ENCODE measurements at regions of chr19 and their contacts with region 1.

Region 1: GRCh38 chr19:38711726-38712153 is 32.5 kb downstream of the CAPN12 start:
- DNase-seq: peak; percentile 55 to 83 (median 72)
- H3K4me3 ChIP-seq: no peak overlapping the region
- H3K27ac ChIP-seq: peak overlapping the region in 1 of 2 donors; percentile 35
- H3K4me1 ChIP-seq: peaks cover 22% of the 10 kb centered on the region
- H3K27me3 ChIP-seq: no peaks in the 10 kb centered on the region
- CTCF ChIP-seq: no peak
- EP300 ChIP-seq: no peak
- POLR2A ChIP-seq: no peak

Region 2: DNA sequence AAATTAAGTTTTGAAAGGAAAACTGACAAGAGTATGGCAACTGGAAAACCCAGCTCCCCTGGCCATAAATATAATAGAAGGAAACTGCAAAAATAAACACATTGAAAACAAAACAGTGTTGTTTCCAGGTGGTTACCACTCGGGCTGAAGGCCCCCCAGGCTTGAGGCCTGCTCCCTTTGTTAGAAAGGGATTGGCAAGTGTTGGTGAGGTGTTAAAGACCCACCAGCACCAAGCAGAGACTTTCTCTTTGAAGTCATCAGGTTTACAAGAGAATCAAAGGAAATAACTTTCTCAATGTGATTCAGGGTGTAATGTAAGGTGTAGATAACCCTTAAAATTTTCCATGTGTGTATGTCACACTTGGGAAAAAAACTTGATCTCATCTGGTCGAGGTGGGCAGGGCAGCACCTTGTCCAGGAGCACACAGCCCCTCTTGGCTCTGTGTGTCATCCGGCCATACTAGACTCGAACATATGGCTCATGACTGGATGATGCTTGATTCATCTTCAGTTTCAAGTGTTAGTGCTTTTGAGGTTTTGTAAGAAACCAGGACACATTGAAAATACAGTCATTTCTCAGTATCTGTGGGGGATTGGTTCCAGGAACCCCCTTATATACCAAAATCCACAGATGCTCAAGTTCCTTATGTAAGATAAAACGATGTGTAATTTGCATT is 56.5 kb before region 1 on chr19:
- intact Hi-C with region 1: loop called in 2 of 4 experiments (anchors 2 to 5 kb)
- DNase-seq: no peak
- H3K4me3 ChIP-seq: no peak overlapping the region
- H3K27ac ChIP-seq: peak overlapping the region; percentile 28 to 72
- H3K4me1 ChIP-seq: peaks cover 52% of the 10 kb centered on the region
- H3K27me3 ChIP-seq: no peaks in the 10 kb centered on the region
- CTCF ChIP-seq: no peak
- EP300 ChIP-seq: no peak
- POLR2A ChIP-seq: no peak

Region 3: GRCh38 chr19:38759590-38760003 is 47.9 kb after region 1 on chr19:
- intact Hi-C with region 1: no loop called
- DNase-seq: no peak
- H3K4me3 ChIP-seq: no peak overlapping the region
- H3K27ac ChIP-seq: no peak overlapping the region
- H3K4me1 ChIP-seq: no peaks in the 10 kb centered on the region
- H3K27me3 ChIP-seq: no peaks in the 10 kb centered on the region
- CTCF ChIP-seq: no peak
- EP300 ChIP-seq: no peak
- POLR2A ChIP-seq: no peak

Measured in ovary (tissue), 10 donors.